Activated CD8-positive, alpha-beta T cell treated with anti-CD3 and anti-CD28 coated beads for 36 hours (primary cell): ENCODE measurements at regions of chr18 and their contacts with region 1.

Region 1: GRCh38 chr18:21600526-21601410 is at the start of gene ESCO1:
- DNase-seq: peak; percentile 97
- ATAC-seq: peak; percentile 92
- H3K4me3 Mint-ChIP-seq: peak within 1 kb of the TSS; percentile 86
- H3K27ac Mint-ChIP-seq: peak within 1 kb of the TSS; percentile 98
- H3K4me1 Mint-ChIP-seq: peaks cover 39% of the 10 kb centered on the region
- H3K27me3 Mint-ChIP-seq: no peaks in the 10 kb centered on the region
- CTCF ChIP-seq: peak; percentile 97
- total RNA-seq, gene ESCO1: 21.8 to 23.1 TPM

Region 2: GRCh38 chr18:21548637-21549036 is 52.1 kb before region 1 on chr18:
- CTCF ChIA-PET with region 1: interaction called, 3 read pairs
- POLR2A ChIA-PET with region 1: no interaction called
- intact Hi-C with region 1: loop called (anchors 10 kb)
- DNase-seq: no peak
- ATAC-seq: no peak
- H3K4me3 Mint-ChIP-seq: no peak overlapping the region
- H3K27ac Mint-ChIP-seq: no peak overlapping the region
- H3K4me1 Mint-ChIP-seq: peaks cover 11% of the 10 kb centered on the region
- H3K27me3 Mint-ChIP-seq: no peaks in the 10 kb centered on the region
- CTCF ChIP-seq: no peak

Region 3: DNA sequence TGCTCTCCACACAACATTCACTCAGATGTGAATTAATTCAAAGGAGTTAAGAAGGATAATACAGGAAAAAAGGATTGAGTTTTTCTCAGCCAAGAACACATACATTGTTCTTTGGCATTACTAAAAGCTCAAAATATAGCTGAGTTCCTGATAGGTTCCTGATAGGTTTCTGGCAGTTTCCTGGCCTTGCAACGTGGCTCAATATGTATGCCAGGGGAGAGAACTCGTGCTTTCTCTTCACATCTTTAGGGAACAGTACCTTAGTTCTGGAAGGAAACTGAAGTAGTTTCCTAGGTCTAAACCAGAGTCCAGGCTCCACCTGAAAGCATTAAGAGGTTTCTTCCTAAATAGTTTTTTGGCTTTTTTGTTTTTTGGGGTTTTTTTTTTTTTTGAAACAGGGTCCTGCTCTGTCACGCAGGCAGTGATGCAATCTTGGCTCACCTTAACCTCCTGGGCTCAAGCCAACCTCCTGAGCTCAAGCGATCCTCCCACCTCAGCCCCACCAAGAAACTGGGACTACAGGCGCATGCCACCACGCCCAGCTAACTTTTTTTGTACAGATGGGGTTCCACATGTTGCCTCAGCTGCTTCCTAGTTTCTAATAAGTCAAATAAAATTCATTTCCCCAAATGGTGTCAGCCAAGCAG is 43.0 kb before region 1 on chr18:
- CTCF ChIA-PET with region 1: interaction called, 10 read pairs
- POLR2A ChIA-PET with region 1: no interaction called
- intact Hi-C with region 1: no loop called
- DNase-seq: no peak
- ATAC-seq: no peak
- H3K4me3 Mint-ChIP-seq: no peak overlapping the region
- H3K27ac Mint-ChIP-seq: peak overlapping the region; percentile 20
- H3K4me1 Mint-ChIP-seq: peaks cover under 1% of the 10 kb centered on the region
- H3K27me3 Mint-ChIP-seq: no peaks in the 10 kb centered on the region
- CTCF ChIP-seq: no peak

Region 4: DNA sequence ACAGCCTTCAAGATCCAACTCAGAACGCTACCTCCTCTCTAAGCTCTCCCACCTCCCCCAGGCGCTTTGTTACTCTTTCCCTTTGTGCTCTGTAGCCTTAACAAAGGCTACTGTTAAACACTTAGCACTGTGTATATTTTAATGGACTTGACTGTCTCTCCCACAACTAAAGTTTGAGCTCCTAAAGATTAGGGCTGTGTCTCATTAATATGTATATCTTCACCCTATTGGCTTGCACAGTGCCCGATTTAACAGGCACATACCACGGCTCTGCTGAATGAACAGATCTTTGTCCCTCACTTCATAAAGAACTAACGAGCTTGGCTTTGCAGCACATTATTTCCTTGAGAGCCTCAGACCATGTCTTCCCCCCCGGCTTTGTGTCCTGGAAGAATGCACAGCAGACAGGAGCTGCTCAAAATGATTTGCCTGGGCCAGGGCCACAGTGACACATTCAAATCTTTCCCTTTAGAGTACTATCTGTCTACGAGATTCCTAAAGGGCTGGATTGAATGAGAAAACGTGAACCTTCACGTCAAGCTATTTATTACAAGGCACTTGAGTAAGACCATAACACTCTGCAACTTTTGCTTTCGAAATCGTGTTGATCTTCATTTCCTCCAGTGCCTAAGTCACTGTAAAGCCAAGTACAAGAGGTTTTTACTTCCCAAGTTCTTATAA is 81.7 kb after region 1 on chr18:
- CTCF ChIA-PET with region 1: interaction called, 13 read pairs
- POLR2A ChIA-PET with region 1: interaction called, 5 read pairs
- intact Hi-C with region 1: no loop called
- DNase-seq: peak; percentile 11
- ATAC-seq: peak; percentile 84
- H3K4me3 Mint-ChIP-seq: no peak overlapping the region
- H3K27ac Mint-ChIP-seq: no peak overlapping the region
- H3K4me1 Mint-ChIP-seq: peaks cover 10% of the 10 kb centered on the region
- H3K27me3 Mint-ChIP-seq: no peaks in the 10 kb centered on the region
- CTCF ChIP-seq: no peak